Posterior cingulate gyrus (tissue), 11 donors: ENCODE measurements at regions of chr11 and their contacts with region 1.

Region 1: GRCh38 chr11:131495423-131495822 is 125.0 kb downstream of the NTM start:
- DNase-seq: peak in 9 of 10 donors; percentile 49 to 89 (median 60)

Region 2: DNA sequence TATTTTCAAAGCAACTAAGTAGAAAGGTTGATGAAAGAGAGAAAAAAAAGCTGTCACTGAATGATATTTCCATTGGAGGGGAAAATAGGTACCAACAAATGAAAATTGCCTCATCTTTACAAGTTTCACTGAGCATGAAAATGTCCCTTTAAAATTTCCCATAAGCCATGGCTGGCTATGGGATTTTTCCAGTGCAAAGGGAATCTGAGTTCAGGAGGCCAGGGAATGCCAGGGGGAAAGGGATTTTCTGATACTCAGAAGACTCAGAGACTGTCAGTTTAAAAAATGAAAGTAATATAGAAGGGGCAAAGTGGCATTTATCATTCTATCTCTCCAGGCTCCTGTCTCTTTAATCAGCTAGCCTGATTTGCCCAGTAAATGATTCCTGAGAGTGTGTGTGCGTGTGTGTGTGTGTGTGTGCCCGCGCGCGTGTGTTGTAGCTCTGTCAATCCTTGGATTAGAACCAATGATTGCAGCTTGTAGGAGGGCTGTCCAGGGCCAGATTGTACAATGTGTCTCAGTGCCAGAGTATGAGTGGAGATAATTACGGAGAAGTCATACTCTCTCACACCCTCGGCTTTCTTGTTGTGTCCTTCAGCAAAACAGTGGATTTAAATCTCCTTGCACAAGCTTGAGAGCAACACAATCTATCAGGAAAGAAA is 125.2 kb before region 1 on chr11 and contains the start of gene NTM:
- intact Hi-C with region 1: loop called (anchors 5 kb)
- DNase-seq: peak; percentile 55 to 95 (median 66)

Region 3: GRCh38 chr11:131511794-131512193 is 16.4 kb after region 1 on chr11:
- intact Hi-C with region 1: no loop called
- DNase-seq: peak in 3 of 10 donors; percentile 39 to 40 (median 39)